Activated CD4-positive, alpha-beta T cell treated with anti-CD3 and anti-CD28 coated beads, Interleukin-2, amount 10 ng/mL, durations not matched to agents 24 days and 14 days (primary cell): ENCODE measurements at regions of chr16 and their contacts with region 1.

Region 1: DNA sequence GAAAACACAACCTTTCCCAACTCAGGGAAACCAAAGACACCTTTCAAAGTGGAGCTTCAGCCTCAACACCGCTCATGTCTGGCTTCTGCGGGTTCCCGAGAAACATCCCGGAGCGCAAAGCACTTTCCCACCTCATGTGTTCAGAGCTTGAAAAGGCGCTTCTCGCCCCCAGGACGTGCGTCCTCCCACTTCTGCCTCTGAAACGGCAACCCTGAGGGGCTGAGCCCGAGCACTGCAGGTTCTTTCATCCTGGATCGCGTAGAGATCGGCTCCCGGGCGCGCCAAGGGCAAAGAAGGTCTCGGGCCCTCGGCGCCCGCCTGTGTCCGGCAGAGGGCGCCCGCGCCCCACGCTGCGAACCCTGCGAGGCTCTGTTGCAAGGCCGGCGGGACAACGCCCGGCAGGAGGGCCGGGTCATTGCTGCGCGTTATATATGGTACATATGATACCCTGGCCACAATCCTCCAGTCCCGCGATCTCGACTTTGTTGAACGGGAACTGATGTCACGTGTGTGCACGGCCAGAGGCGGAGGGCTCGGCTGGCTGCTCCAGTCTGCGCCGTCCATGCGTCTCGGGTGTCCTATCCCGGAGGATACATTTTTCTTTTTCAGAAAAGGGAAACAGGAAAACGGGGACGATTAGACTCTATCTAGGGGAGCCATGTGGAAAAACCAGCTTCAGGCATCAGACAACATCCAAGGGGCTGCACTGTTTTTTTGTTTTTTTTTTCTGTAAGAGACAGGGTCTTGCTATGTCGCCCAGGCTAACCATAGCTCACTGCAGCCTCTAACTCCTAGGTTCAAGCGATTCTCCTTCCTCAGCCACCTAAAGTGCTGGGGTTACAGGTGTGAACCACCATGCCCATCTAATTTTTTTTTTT is 19.1 kb downstream of the COQ7 start:
- DNase-seq: peak; percentile 95
- H3K4me3 Mint-ChIP-seq: peak overlapping the region; percentile 81
- H3K27ac Mint-ChIP-seq: no peak overlapping the region
- H3K4me1 Mint-ChIP-seq: peaks cover 5% of the 10 kb centered on the region
- H3K27me3 Mint-ChIP-seq: peaks cover 12% of the 10 kb centered on the region

Region 2: GRCh38 chr16:19114352-19115052 is 27.9 kb after region 1 on chr16:
- intact Hi-C with region 1: loop called (anchors 1 kb)
- DNase-seq: peak; percentile 73
- H3K4me3 Mint-ChIP-seq: peak overlapping the region; percentile 87
- H3K27ac Mint-ChIP-seq: peak overlapping the region; percentile 87
- H3K4me1 Mint-ChIP-seq: peaks cover 35% of the 10 kb centered on the region
- H3K27me3 Mint-ChIP-seq: peaks cover 9% of the 10 kb centered on the region

Region 3: DNA sequence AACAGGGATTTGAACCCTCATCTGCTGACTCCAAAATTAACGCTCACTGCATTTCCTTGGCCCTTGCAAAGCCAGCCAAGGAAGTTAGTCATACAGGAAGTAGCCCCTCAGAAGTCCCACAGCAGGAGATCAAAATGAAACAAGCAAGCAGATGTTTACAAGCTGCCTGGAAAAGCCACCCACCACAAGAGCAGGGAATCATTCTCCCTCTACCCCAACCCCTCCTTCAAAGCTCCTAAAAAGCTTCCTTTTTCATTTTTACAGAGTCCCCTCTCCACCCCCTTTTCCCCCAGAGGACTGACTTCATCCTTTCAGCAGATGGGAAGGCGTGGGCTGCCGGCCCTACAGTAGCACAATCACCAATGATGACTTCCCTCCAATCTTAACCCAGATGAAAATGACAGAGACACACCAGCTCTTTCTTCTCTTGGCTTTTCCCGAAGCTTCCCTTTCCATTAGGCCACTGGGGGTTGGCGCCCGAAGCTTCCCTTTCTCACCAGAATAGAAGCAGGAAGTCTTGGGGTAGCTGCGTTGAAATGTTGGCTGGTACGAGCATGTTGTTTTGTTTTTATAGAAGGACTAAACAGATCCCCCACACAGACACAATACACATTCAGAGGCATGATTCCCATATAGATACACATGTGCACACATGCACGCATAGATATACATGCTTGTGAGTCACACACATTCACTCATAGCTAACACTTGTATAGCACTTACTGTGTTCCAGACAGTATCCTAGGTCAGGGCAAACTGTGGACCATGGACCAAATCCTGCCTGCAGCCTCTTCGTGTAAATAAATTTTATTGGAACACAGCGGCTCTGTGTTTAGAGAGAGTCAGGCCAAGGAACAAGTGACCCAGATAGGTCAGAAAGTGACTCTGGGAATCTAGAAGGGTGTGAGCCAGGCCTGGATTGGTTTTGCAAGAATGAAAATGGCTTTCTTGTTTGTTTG is 44.6 kb after region 1 on chr16:
- intact Hi-C with region 1: loop called (anchors 5 kb)
- DNase-seq: peak; percentile 59
- H3K4me3 Mint-ChIP-seq: peak overlapping the region; percentile 59
- H3K27ac Mint-ChIP-seq: peak overlapping the region; percentile 82
- H3K4me1 Mint-ChIP-seq: peaks cover 53% of the 10 kb centered on the region
- H3K27me3 Mint-ChIP-seq: no peaks in the 10 kb centered on the region

Region 4: GRCh38 chr16:19167710-19168370 is 81.3 kb after region 1 on chr16 and contains the start of gene SYT17:
- intact Hi-C with region 1: loop called (anchors 2 kb)
- DNase-seq: peak; percentile 83
- H3K4me3 Mint-ChIP-seq: peak within 1 kb of the TSS; percentile 53
- H3K27ac Mint-ChIP-seq: no peak within 1 kb of the TSS
- H3K4me1 Mint-ChIP-seq: peaks cover 2% of the 10 kb centered on the region
- H3K27me3 Mint-ChIP-seq: peaks cover 32% of the 10 kb centered on the region
- total RNA-seq, gene SYT17: 1.3 and 1.9 TPM in 2 replicates

Region 5: GRCh38 chr16:19179546-19180490 is 93.3 kb after region 1 on chr16:
- intact Hi-C with region 1: loop called (anchors 1 kb)
- DNase-seq: peak; percentile 85
- H3K4me3 Mint-ChIP-seq: no peak overlapping the region
- H3K27ac Mint-ChIP-seq: no peak overlapping the region
- H3K4me1 Mint-ChIP-seq: peaks cover 2% of the 10 kb centered on the region
- H3K27me3 Mint-ChIP-seq: peaks cover 4% of the 10 kb centered on the region

Region 6: DNA sequence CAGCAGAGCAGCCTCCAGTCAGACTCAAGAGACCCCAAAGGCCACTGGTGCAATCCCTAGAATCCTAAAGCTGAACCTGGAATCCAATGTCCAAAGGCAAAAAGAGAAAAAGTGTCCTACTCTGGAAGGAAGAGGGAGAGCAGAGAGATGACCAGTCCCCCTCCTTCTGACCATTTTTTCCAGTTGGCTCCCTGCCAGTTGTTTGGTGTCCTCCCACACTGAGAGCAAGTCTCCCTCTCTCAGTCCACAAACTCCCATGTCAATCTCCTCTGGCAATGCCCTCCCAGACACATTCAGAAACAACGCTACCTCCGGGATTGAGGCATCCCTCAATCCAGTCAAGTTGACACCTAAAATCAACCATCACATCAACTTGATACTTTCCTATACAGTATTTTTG is 194.7 kb after region 1 on chr16:
- intact Hi-C with region 1: no loop called
- DNase-seq: no peak
- H3K4me3 Mint-ChIP-seq: no peak overlapping the region
- H3K27ac Mint-ChIP-seq: no peak overlapping the region
- H3K4me1 Mint-ChIP-seq: peaks cover 6% of the 10 kb centered on the region
- H3K27me3 Mint-ChIP-seq: peaks cover 8% of the 10 kb centered on the region

Region 7: DNA sequence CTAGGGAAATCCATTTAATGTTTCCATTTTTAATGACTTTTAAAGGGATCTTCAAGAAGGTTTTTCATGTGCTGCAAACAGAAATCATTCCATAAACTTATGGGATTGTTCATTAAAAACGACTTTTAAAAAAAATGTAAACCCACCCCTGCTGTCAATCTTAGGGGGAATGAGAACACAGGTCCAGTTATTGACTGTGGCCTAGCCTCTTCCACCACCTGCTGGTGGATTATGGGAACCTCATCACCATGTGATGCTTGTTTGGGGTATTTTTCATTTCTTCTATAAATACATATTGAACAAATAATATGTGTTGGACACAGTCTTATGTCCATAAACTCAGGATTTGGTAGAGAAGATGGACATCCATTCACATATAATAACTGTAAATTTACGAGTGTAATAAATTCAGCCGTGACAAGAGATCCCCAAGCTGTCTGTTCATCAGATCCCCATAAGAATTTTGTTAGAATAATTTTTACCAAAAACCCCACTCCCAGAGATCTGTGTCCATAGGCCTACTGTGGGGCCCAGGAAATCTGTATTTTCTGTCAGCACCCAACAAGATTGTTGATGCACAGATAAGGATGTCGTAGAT is 289.1 kb after region 1 on chr16:
- intact Hi-C with region 1: loop called (anchors 1 kb)
- DNase-seq: peak; percentile 77
- H3K4me3 Mint-ChIP-seq: no peak overlapping the region
- H3K27ac Mint-ChIP-seq: no peak overlapping the region
- H3K4me1 Mint-ChIP-seq: peaks cover 11% of the 10 kb centered on the region
- H3K27me3 Mint-ChIP-seq: no peaks in the 10 kb centered on the region

Region 8: DNA sequence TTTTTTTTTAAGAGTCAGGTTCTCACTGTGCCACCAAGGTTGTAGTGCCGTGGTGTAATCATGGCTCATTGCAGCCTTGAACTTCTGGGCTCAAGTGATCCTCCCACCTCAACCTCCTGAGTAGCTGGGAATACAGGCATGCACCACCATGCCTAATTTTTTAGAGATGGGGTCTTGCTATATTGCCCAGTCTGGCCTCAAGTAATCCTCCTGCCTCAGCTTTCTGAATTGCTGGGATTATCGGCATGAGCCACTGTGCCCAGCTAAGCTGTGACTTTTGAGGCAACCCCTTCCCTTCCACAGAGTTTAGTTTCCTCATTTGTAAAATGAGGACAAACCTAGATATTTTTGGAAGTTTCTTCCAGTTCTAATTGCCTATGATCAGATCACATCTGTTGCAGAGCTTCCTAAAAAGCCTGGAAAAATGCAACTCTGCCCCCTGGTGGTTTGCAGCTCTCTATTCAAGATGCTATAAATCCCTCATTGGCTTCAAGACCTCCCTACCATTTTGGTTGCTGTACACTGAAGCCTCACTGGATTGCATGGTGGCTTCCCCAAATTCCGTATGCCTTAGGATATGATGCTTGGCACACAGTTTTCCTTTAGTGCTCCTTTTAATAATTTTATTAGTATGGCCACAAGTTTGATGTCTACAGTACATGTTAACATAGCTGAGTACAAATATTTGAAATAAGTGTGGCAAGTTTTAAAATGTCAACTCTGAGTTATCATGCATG is 416.0 kb after region 1 on chr16:
- intact Hi-C with region 1: loop called (anchors 2 kb)
- DNase-seq: peak; percentile 89
- H3K4me3 Mint-ChIP-seq: no peak overlapping the region
- H3K27ac Mint-ChIP-seq: no peak overlapping the region
- H3K4me1 Mint-ChIP-seq: no peaks in the 10 kb centered on the region
- H3K27me3 Mint-ChIP-seq: no peaks in the 10 kb centered on the region